ENCODE measurements at regions of chr9 and their contacts with region 1.

Region 1: DNA sequence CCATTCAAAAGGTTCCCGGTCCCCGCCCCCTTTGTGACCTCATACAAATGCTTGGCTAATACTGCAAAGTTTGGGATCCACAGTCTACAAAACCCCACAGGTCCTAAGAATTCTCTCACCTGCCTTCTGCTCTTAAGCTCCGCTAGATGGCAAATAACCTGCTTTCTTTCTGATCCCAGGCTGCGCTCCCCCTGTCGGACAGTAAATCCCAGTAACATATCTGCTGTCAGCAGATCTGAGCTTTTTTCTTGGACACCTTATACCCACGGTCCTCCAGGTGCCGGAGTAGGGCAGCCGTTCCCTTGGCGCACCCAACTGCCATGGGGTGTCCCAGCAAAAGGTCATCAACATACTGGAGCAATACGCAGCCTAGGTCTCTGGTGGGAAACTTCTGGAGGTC is 39.0 kb upstream of the PPP1R26 start:
- DNase-seq: peak; percentile 41 to 87
- ATAC-seq: peak; percentile 60 to 70; a peak in 5 of 6 replicates
- H3K4me3 ChIP-seq: no peak overlapping the region
- H3K27ac ChIP-seq: no peak overlapping the region
- H3K4me1 ChIP-seq: no peaks in the 10 kb centered on the region
- CTCF ChIP-seq: peak; percentile 69
- EP300 ChIP-seq: no peak
- POLR2A ChIP-seq: no peak
- RAD21 ChIP-seq: peak; percentile 44 to 60; a peak in 4 of 5 replicates

Region 2: DNA sequence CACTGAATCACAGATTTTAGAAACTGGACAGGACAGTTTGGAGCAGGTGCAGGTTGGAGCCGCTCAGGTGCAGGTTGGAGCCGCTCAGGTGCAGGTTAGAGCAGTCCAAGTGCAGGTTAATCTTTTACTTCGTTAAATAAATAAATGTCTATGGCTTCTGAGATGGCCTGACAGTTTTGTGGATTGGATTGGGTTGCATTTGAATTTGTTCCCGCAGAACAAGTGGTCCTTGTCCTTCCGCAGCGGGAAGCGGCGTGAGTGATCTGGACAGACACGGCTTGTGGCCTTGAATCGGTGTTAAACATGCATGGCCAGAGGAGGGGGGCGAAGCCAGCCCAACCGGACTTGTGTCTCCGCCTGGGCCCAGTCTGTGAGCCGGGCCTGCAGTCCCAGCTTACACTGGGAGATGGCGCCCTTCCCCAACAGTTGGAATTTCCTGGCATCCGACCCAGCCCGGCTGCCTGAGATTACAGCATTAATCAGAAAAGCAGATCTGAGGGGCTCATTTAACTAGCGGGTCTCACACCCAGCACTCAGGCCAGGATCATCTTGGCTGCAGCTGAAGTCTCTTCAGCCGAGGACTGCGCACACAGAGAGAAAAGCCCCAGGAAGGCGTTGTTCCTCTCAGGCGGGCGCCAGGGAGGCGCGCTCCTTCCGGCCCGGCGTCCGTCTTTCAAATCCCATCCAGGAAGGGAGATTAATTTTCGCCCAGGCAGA is 354.6 kb before region 1 on chr9:
- CTCF ChIA-PET with region 1: interaction called, 26 read pairs
- POLR2A ChIA-PET with region 1: no interaction called
- DNase-seq: peak; percentile 72 to 81
- ATAC-seq: peak; percentile 61 to 85
- H3K4me3 ChIP-seq: peak overlapping the region; percentile 33
- H3K27ac ChIP-seq: peak overlapping the region in 1 of 2 experiments; percentile 49; a peak in 2 of 6 replicates
- H3K4me1 ChIP-seq: peaks cover 5% of the 10 kb centered on the region; the same call in 2 of the 3 replicates
- CTCF ChIP-seq: peak; percentile 90
- EP300 ChIP-seq: no peak
- POLR2A ChIP-seq: no peak
- RAD21 ChIP-seq: peak; percentile 97

Region 3: DNA sequence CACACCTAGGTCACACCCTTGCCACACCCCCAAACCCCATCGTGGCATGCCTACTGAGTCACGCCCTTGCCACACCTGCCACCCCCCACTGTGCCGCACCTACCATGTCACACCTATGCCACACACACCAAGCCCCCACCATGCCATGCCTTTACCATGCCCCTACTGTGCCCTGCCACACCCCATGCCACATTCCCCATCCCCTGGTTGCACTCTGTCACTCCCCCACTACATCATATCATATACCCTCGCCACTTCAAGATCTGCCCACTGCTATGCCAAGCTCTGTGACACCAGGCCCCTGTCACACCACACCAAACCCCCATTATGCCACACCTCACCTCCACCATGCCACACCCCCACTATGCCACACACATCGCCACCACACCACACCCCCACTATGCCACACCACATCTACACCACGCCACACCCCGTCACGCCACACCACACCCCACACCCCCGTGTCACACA is 251.9 kb before region 1 on chr9:
- CTCF ChIA-PET with region 1: no interaction called
- POLR2A ChIA-PET with region 1: no interaction called
- DNase-seq: no peak
- ATAC-seq: no peak
- H3K4me3 ChIP-seq: no peak overlapping the region
- H3K27ac ChIP-seq: no peak overlapping the region
- H3K4me1 ChIP-seq: no peaks in the 10 kb centered on the region
- CTCF ChIP-seq: no peak
- EP300 ChIP-seq: no peak
- POLR2A ChIP-seq: no peak
- RAD21 ChIP-seq: no peak

Region 4: GRCh38 chr9:135198586-135199285 is 241.9 kb before region 1 on chr9:
- CTCF ChIA-PET with region 1: no interaction called
- POLR2A ChIA-PET with region 1: no interaction called
- DNase-seq: no peak
- ATAC-seq: no peak
- H3K4me3 ChIP-seq: no peak overlapping the region
- H3K27ac ChIP-seq: no peak overlapping the region
- H3K4me1 ChIP-seq: no peaks in the 10 kb centered on the region
- CTCF ChIP-seq: no peak
- EP300 ChIP-seq: no peak
- POLR2A ChIP-seq: no peak
- RAD21 ChIP-seq: no peak

Region 5: GRCh38 chr9:135416664-135417290 is 23.8 kb before region 1 on chr9:
- CTCF ChIA-PET with region 1: interaction called, 28 read pairs
- POLR2A ChIA-PET with region 1: no interaction called
- DNase-seq: no peak
- ATAC-seq: no peak
- H3K4me3 ChIP-seq: no peak overlapping the region
- H3K27ac ChIP-seq: no peak overlapping the region
- H3K4me1 ChIP-seq: no peaks in the 10 kb centered on the region
- CTCF ChIP-seq: no peak
- EP300 ChIP-seq: no peak
- POLR2A ChIP-seq: no peak
- RAD21 ChIP-seq: no peak

Region 6: GRCh38 chr9:135456436-135457104 is 15.9 kb after region 1 on chr9:
- CTCF ChIA-PET with region 1: interaction called, 13 read pairs
- POLR2A ChIA-PET with region 1: no interaction called
- DNase-seq: no peak
- ATAC-seq: no peak
- H3K4me3 ChIP-seq: no peak overlapping the region
- H3K27ac ChIP-seq: no peak overlapping the region
- H3K4me1 ChIP-seq: no peaks in the 10 kb centered on the region
- CTCF ChIP-seq: no peak
- EP300 ChIP-seq: no peak
- POLR2A ChIP-seq: no peak
- RAD21 ChIP-seq: no peak

Region 7: GRCh38 chr9:135463140-135463539 is 22.5 kb after region 1 on chr9:
- CTCF ChIA-PET with region 1: interaction called, 10 read pairs
- POLR2A ChIA-PET with region 1: no interaction called
- DNase-seq: peak; percentile 27 to 78
- ATAC-seq: peak; percentile 80 to 83
- H3K4me3 ChIP-seq: no peak overlapping the region
- H3K27ac ChIP-seq: peak overlapping the region; percentile 33 to 47; a peak in 1 of 6 replicates
- H3K4me1 ChIP-seq: peaks cover 15% of the 10 kb centered on the region
- CTCF ChIP-seq: no peak
- EP300 ChIP-seq: no peak
- POLR2A ChIP-seq: no peak
- RAD21 ChIP-seq: no peak

Region 8: GRCh38 chr9:135474915-135475314 is 34.3 kb after region 1 on chr9:
- CTCF ChIA-PET with region 1: interaction called, 10 read pairs
- POLR2A ChIA-PET with region 1: no interaction called
- DNase-seq: peak; percentile 60 to 64
- ATAC-seq: peak; percentile 57 to 88; a peak in 4 of 6 replicates
- H3K4me3 ChIP-seq: no peak overlapping the region
- H3K27ac ChIP-seq: no peak overlapping the region
- H3K4me1 ChIP-seq: no peaks in the 10 kb centered on the region
- CTCF ChIP-seq: peak; percentile 46
- EP300 ChIP-seq: no peak
- POLR2A ChIP-seq: no peak
- RAD21 ChIP-seq: peak; percentile 23 to 40; a peak in 3 of 5 replicates

Region 9: GRCh38 chr9:135500525-135501358 is 60.1 kb after region 1 on chr9 and contains the start of gene MRPS2:
- CTCF ChIA-PET with region 1: interaction called, 14 read pairs
- POLR2A ChIA-PET with region 1: no interaction called
- DNase-seq: peak; percentile 86 to 89
- ATAC-seq: peak; percentile 86 to 95
- H3K4me3 ChIP-seq: peak within 1 kb of the TSS; percentile 100
- H3K27ac ChIP-seq: peak within 1 kb of the TSS; percentile 99
- H3K4me1 ChIP-seq: peaks cover 17% of the 10 kb centered on the region
- CTCF ChIP-seq: peak; percentile 80
- EP300 ChIP-seq: no peak
- POLR2A ChIP-seq: peak; percentile 83
- RAD21 ChIP-seq: no peak
- polyA plus RNA-seq, gene MRPS2: 66.9 and 75.5 TPM in 2 replicates